PC-9 (cell line): ENCODE measurements at regions of chr11 and their contacts with region 1.

Region 1: DNA sequence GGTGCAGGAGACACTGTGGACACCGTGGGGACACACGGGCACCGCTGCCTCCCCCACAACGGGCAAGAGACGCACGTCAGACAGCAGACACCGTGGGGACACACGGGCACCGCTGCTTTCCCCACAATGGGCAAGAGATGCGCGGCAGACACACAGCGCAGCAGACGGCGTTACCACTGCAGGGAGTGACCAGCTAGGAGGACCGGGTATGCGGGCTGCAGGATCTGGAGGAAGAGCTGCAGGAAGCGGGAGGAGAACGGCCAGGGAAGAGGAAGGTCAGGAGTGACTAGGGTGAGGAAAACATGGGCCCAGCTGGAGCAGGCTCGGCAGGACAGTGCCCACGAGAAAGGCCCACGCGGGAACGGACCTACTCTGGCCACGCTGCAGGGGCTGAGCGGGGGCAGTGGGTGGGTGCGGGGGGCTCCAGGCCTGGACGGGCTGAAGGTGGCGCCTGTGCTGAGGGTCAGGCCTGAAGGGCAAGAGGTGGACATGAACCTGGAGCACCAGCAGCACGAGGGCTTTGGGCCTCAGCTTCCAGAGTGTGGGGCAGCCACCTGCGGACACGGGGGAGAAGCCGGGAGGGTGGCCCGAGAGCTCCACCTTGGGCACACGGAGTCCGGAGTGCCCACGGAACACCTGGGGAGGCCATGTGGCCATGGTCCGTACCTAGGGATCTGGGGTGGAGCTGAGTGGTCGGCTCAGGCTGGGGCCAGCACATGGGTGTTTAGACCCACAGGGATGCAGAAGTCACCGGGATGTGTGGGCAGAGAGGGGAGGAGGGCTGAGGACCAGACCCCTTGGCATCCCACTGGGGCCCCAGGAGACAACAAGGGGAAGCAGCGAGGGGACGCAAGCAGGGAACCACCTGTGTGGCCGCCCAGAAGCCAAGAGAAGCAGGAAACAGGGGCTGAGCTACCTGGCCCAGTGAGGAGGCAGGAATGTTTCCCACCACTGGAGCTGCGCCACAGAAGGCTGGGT is 16.5 kb downstream of the TOLLIP start:
- DNase-seq: no peak
- H3K4me3 ChIP-seq: no peak overlapping the region
- H3K27ac ChIP-seq: no peak overlapping the region
- H3K4me1 ChIP-seq: no peaks in the 10 kb centered on the region
- H3K27me3 ChIP-seq: no peaks in the 10 kb centered on the region
- CTCF ChIP-seq: no peak

Region 2: DNA sequence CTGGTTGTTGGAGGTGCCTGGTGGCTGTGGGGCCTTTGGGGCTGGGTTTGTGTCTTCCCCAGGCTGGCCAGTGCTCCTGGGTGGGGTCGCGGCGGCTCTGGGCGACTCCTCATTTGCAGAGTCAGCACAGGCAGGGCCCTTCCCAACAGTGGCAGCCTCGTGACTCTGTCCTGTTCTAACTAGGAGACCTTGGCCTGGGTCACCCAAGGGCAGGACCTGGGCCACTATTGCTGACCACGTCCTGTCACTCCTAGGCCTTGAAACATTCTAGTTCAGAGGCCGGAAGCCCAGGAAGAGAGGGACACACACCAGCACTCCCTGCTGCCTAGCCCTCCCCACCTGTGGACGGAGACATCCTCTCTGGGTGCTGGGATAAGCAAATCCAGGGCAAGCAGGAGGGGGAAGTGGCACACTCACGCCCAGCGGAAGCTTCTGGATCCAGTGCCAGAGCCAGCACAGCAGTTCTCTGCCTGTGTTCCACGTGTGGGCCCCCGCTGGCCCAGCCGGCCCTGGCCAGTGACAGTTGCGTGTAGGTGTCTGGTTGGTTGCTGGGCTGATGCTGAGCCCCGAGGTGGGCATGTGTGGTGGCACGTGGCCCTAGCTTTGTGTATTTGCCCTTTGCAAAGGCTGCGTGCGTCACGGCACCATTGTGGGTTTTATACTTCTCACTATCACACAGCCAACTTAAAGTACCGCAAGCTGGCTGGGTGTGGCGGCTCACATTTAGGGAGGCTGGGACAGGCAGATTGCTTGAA is 378.0 kb before region 1 on chr11:
- CTCF ChIA-PET with region 1: no interaction called
- POLR2A ChIA-PET with region 1: no interaction called
- intact Hi-C with region 1: no loop called
- DNase-seq: no peak
- H3K4me3 ChIP-seq: no peak overlapping the region
- H3K27ac ChIP-seq: no peak overlapping the region
- H3K4me1 ChIP-seq: peaks cover 5% of the 10 kb centered on the region
- H3K27me3 ChIP-seq: no peaks in the 10 kb centered on the region
- CTCF ChIP-seq: no peak

Region 3: GRCh38 chr11:1351278-1351937 is 58.5 kb after region 1 on chr11:
- CTCF ChIA-PET with region 1: no interaction called
- POLR2A ChIA-PET with region 1: interaction called, 10 read pairs
- intact Hi-C with region 1: no loop called
- DNase-seq: peak in 1 of 2 experiments; percentile 52
- H3K4me3 ChIP-seq: no peak overlapping the region
- H3K27ac ChIP-seq: no peak overlapping the region
- H3K4me1 ChIP-seq: no peaks in the 10 kb centered on the region
- H3K27me3 ChIP-seq: no peaks in the 10 kb centered on the region
- CTCF ChIP-seq: no peak